Posterior cingulate gyrus (tissue), 11 donors: ENCODE measurements at regions of chr19 and their contacts with region 1.

Region 1: DNA sequence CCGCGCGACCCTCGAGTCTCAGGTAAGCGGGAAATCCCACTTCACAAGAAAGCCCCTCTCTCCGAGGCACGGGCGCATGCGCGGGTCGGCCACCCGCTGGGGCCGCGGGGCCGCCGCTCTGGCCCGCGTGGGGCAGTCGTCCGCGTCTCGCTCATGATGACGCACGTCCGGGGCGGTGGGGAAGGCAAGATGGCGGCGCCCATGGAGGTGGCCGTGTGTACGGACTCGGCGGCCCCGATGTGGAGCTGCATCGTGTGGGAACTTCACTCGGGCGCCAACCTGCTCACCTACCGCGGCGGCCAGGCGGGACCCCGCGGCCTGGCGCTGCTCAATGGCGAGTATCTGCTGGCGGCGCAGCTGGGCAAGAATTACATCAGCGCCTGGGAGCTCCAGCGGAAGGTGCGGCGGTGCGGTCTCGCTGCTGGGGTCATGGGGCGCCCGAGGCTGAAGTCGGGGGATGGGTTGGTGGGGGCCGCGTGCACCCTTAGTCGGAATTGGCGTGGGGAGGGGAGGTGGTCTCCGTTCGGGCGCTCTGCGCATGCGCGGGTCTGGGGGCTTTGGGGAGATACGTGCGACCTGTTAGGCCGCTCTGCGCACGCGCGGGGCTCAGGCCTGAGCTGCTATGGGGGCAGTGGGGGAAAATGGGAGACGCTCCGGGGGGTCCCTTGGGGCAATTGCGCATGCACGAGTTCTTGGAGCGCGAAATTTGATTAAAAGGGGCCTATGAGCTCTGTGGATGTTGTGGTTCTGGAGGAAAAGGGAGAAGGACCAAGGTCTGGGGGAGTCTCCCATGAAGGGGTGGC is at the start of gene WDR18:
- DNase-seq: peak; percentile 90 to 99 (median 96)

Region 2: GRCh38 chr19:925526-926322 is 58.6 kb before region 1 on chr19 and contains the start of gene ARID3A:
- intact Hi-C with region 1: loop called (anchors 1 kb)
- DNase-seq: peak; percentile 63 to 97 (median 76)